ENCODE measurements at regions of chr10 and their contacts with region 1.

Region 1: DNA sequence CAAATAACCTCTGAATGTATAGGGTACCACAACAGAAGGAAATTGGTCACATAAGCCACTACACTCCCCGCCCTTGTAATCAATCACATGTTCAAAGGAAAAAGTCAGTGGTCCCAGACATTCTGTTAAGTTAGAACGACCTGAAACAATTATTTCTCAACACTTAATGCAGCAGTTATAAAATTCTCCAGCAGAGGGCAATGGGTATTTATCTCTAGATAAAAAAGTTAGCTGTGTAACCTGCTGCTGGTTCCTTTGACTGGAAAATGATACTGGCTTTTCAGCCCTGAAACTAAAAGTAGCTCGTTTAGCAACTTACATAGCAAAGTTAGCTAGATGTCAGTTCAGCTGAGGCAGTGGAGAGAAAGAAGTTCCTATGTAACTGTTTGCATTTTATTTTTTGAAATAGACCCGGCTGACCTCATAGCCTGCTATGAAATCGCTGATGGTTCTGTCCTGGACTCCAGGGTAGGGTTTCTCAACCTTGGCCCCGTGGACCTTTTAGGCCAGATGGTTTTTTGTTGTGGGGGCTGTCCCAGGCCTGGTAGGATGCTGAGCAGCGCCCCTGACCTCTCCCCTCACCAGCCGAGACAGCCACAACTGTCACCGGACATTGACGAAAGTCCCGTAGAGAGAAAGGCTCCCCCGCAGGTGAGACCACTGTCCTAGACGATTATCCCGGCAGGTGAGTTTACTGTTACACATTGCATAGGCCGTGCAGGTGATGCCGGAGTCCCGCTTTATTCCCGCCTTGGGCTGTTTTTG is 40.2 kb upstream of the PROSER2 start:
- DNase-seq: peak; percentile 32
- H3K4me3 ChIP-seq: no peak overlapping the region
- H3K27ac ChIP-seq: no peak overlapping the region
- H3K27me3 ChIP-seq: peaks cover 5% of the 10 kb centered on the region
- CTCF ChIP-seq: peak; percentile 80

Region 2: GRCh38 chr10:11765141-11765540 is 17.8 kb before region 1 on chr10:
- CTCF ChIA-PET with region 1: no interaction called
- POLR2A ChIA-PET with region 1: no interaction called
- DNase-seq: no peak
- H3K4me3 ChIP-seq: no peak overlapping the region
- H3K27ac ChIP-seq: no peak overlapping the region
- H3K27me3 ChIP-seq: peaks cover 10% of the 10 kb centered on the region
- CTCF ChIP-seq: no peak

Region 3: DNA sequence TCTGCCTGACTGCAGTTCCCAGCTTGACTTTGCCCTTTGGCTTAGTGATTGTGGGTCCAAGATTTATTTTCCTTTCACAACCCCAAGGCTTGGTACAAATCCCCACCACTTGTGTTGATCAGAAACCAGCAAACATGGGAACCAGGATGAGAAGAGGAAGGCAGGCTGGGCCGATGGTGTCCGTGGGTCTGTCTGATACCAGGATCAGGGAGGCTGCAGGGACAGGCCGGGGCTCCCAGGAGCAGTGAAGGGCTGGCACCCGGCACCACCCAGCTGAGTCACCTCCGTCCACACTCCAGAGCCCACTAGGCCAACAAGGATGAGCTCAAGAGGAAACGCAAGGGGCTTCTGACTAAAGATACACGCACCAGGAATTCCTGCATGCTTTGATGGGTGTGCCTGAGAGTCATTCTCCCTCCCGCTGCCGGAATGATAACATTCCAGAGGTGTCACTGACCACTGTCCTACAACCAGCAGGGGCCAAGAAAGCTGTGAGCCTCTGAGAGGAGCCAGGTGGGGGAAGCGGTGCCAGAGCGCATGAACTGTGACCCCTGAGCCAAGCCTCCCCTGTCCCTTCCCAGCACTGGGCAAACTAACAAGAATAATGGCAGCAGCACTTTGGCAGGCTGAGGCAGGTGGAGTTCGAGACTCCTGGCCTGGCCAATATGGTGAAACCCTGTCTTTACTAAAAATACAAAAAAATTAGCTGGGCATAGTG is 10.9 kb after region 1 on chr10:
- CTCF ChIA-PET with region 1: interaction called, 15 read pairs
- POLR2A ChIA-PET with region 1: no interaction called
- DNase-seq: no peak
- H3K4me3 ChIP-seq: no peak overlapping the region
- H3K27ac ChIP-seq: no peak overlapping the region
- H3K27me3 ChIP-seq: no peaks in the 10 kb centered on the region
- CTCF ChIP-seq: no peak

Region 4: DNA sequence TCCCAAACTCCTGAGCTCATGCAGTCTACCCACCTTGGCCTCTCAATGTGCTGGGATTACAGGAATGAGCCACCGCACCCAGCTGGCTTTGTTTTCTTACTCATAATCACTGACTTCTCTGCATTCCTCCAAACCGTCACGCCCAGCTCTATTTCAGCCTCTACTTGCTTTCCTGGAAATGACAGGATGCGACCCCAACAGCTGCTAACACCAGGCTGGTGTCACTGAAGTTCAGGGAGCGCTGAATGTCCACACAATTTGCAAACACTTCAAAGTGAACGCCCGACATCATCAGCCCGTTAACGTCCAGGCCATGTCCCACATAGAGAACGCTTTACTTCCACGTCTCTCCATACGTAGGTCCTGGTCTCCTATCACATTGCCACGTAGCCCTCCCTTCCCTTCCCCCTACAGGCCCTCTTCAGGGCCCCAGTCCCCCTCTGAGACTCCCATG is 27.4 kb after region 1 on chr10:
- CTCF ChIA-PET with region 1: interaction called, 10 read pairs
- POLR2A ChIA-PET with region 1: no interaction called
- DNase-seq: peak; percentile 7
- H3K4me3 ChIP-seq: no peak overlapping the region
- H3K27ac ChIP-seq: no peak overlapping the region
- H3K27me3 ChIP-seq: peaks cover under 1% of the 10 kb centered on the region
- CTCF ChIP-seq: no peak

Region 5: DNA sequence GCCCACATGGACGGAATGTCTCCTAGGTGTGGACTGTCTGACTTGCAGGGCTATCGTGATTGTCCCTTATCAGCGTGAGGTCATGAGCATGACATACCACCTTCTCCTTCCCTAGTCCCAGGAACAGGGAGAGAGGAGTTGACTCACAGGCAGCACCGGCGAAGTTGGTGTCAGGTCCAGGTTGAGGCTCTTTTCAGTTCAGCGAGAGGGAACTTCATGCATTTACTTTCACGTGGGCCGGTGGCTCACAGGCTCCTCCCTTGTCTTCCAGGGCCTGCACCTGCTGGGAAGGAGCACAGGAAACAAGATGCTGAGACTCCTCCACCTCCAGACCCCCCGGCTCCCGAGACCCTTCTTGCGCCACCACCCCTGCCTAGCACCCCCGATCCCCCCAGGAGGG is 86.2 kb after region 1 on chr10:
- CTCF ChIA-PET with region 1: no interaction called
- POLR2A ChIA-PET with region 1: no interaction called
- DNase-seq: no peak
- H3K4me3 ChIP-seq: no peak overlapping the region
- H3K27ac ChIP-seq: no peak overlapping the region
- H3K27me3 ChIP-seq: peaks cover 13% of the 10 kb centered on the region
- CTCF ChIP-seq: no peak

Measured in AG04450 (cell line).